Activated T-helper 2 cell treated with anti-CD3 and anti-CD28 coated beads, Interferon-gamma antibody, Interleukin-2, Interleukin-4, amounts not matched to agents 10 μg/mL and 5 μg/mL and 100 μg/mL, durations not matched to agents 14 hours and 24 hours and 36 hours (primary cell): ENCODE measurements at regions of chr7 and their contacts with region 1.

Region 1: GRCh38 chr7:145382762-145383161 is 546.9 kb upstream of the TPK1 start:
- DNase-seq: no peak
- H3K4me3 Mint-ChIP-seq: no peak overlapping the region
- H3K27ac Mint-ChIP-seq: no peak overlapping the region
- H3K4me1 Mint-ChIP-seq: no peaks in the 10 kb centered on the region
- H3K27me3 Mint-ChIP-seq: no peaks in the 10 kb centered on the region

Region 2: DNA sequence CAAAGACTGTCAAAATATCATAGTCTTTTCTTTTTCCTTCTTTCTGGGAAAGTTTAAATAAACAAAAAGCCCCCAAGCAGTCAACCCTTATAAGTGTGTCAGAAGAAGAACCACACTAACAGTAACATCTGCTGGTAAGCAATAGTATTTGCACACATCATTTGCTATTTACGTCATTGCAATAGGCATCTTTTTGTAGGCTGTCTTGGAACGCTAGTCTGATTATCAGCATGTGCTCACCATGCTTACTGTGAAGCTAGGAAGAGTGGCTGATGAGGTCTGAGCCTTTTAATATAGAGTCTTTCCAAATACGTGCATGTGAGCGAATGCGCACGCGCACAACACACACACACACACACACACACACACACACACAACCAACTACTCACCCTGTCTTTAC is 52.0 kb after region 1 on chr7:
- intact Hi-C with region 1: loop called (anchors 10 kb)
- DNase-seq: no peak
- H3K4me3 Mint-ChIP-seq: no peak overlapping the region
- H3K27ac Mint-ChIP-seq: no peak overlapping the region
- H3K4me1 Mint-ChIP-seq: no peaks in the 10 kb centered on the region
- H3K27me3 Mint-ChIP-seq: no peaks in the 10 kb centered on the region

Region 3: DNA sequence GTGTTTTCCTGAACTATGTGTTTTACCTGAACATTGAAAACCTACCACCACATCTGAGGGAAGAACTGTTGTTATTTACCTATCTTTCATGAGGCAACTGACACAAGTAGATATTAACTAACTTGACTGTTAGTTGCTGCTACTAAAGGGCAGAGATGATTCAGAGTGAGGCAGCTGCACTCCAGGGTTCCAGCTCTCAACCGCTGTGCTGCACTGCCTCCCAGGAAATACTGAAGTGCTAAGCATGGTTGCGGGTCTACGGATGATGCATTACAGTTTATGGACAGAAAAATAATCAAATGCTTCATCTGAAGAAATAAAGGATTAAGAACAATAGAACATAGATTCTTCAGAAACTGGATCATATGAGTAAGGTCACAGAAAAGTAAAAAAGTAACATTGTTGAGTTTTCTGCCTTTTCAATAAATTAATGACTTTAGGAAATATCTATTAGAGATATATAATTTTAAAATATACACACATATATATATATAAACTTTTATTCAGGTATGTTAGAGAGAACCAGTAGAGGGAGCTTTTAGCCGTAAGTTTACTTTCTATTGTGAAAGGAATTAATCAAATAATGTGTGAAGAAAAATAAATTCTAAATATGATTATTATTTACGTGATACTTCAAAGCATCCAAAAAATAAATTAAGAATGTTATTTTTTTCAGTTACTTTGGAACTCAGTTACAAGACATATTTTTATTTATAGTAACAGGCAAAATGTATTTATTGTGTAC is 1353.9 kb after region 1 on chr7:
- intact Hi-C with region 1: no loop called
- DNase-seq: no peak
- H3K4me3 Mint-ChIP-seq: no peak overlapping the region
- H3K27ac Mint-ChIP-seq: no peak overlapping the region
- H3K4me1 Mint-ChIP-seq: no peaks in the 10 kb centered on the region
- H3K27me3 Mint-ChIP-seq: no peaks in the 10 kb centered on the region